IMR-90 (cell line): ENCODE measurements at regions of chr5 and their contacts with region 1.

Region 1: DNA sequence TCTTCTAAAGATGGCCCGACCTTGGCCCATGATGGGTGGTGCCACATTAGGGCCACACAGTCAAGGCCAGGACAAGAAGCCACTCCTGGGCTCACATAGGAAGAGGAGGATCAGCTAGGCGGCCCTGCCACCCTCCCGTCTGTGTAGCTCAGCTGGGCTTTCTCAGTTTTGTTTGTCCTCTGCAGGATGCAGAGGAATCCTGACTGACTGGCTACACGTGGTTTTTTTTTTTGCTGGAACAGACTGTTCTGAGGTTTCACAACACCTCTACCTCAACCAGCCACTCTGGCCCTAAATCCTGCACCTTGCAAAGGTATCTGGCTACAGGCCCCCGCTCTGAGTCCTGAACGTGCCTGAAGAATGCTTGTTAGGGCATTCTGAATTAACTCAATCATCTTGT is 88.3 kb upstream of the MSX2 start:
- DNase-seq: no peak
- ATAC-seq: no peak
- H3K4me3 ChIP-seq: no peak overlapping the region
- H3K27ac ChIP-seq: no peak overlapping the region
- H3K4me1 ChIP-seq: no peaks in the 10 kb centered on the region
- H3K27me3 ChIP-seq: no peaks in the 10 kb centered on the region; the same call in 1 of the 2 replicates
- CTCF ChIP-seq: no peak
- POLR2A ChIP-seq: no peak
- RAD21 ChIP-seq: no peak

Region 2: GRCh38 chr5:173917788-173918786 is 718.0 kb before region 1 on chr5:
- CTCF ChIA-PET with region 1: no interaction called
- POLR2A ChIA-PET with region 1: no interaction called
- dilution Hi-C with region 1: no loop called
- in situ Hi-C with region 1: no loop called
- intact Hi-C with region 1: loop called (anchors 5 kb)
- DNase-seq: peak; percentile 89
- ATAC-seq: peak; percentile 96
- H3K4me3 ChIP-seq: peak overlapping the region; percentile 60
- H3K27ac ChIP-seq: peak overlapping the region; percentile 72
- H3K4me1 ChIP-seq: peaks cover 2% of the 10 kb centered on the region; the same call in 1 of the 2 replicates
- H3K27me3 ChIP-seq: no peaks in the 10 kb centered on the region
- CTCF ChIP-seq: no peak
- POLR2A ChIP-seq: peak; percentile 79
- RAD21 ChIP-seq: no peak